ENCODE measurements at regions of chr18 and their contacts with region 1.

Region 1: GRCh38 chr18:44895176-44895798 is 214.6 kb downstream of the SETBP1 start:
- DNase-seq: peak; percentile 46
- ATAC-seq: peak; percentile 83

Region 2: DNA sequence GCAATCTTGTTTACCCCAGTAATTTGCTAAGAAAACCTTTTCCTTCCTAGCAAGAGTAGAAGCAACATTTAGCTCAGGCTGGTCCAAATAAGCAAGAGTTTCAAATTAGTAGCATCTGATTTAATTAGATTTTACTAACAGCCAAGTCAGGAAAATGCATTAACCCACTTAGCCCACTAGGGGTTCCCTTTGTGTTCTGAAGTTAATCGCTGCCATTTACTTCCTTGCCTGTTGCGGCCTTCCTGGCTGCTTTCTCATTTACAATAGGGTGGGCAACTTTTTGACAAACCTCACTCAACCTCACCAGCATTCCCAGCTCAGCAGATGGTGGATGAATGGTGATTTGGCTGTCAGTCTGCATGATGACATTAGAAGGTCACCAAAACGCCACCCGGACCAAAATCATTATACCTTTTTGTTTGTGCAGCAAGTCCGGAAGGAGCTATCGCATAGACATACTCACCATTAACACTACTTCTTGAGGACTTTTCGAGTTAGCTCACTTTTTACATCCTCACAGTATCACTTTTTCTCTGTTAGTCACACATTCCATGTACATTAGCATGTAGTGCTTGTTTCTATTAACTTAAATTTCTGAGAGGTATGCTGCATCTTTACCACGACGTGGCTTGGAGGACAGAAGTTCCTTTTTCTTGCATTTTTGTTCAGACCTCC is 316.1 kb before region 1 on chr18:
- intact Hi-C with region 1: loop called (anchors 10 kb)
- DNase-seq: no peak
- ATAC-seq: no peak

Region 3: DNA sequence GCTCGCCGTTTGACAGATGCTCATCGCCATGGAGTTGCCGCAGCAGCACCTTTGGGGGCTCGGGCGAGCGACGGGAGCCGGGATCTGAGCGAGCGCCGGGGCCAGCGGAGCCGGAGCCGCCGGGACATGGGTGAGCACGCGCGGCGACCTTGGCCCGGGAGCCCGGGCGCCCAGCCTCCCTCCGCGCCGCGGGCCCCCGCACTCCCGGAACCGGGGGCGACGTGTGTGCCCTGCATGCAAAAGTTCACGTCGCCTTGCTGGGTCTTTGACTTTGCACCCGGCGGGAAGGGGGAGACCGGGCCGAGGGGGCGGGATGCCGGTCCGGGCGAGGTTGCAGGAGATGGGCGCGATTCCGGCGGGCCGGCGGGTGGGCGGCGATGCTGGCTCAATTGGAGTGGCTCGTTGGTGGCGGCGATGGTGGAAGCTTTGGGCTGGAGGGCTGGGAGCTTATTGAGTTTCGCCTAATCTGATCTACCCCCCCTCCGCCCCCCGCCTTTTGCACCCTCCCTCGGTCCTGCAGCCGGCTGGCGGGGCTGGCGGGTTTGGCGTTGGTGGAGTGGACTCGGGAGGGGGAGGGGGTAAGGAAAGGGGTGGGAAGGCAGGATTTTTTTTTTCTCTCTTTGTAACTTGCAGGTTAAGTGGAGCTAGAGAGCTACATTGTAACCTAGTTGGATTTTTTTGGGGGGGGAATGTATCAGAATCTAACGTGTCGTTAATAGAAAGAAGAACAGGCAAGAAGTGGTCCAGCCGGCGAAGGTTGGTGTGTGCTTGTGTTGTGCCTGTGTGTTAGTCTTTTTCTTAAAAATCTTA is 214.8 kb before region 1 on chr18 and contains the start of gene SETBP1:
- intact Hi-C with region 1: loop called (anchors 10 kb)
- DNase-seq: peak; percentile 71
- ATAC-seq: peak; percentile 34
- total RNA-seq, gene SETBP1: 6.3 TPM

Region 4: GRCh38 chr18:44838971-44839666 is 56.2 kb before region 1 on chr18:
- intact Hi-C with region 1: no loop called
- DNase-seq: peak; percentile 83
- ATAC-seq: peak; percentile 76